Motor neuron (in vitro differentiated cells): ENCODE measurements at regions of chr5 and their contacts with region 1.

Region 1: DNA sequence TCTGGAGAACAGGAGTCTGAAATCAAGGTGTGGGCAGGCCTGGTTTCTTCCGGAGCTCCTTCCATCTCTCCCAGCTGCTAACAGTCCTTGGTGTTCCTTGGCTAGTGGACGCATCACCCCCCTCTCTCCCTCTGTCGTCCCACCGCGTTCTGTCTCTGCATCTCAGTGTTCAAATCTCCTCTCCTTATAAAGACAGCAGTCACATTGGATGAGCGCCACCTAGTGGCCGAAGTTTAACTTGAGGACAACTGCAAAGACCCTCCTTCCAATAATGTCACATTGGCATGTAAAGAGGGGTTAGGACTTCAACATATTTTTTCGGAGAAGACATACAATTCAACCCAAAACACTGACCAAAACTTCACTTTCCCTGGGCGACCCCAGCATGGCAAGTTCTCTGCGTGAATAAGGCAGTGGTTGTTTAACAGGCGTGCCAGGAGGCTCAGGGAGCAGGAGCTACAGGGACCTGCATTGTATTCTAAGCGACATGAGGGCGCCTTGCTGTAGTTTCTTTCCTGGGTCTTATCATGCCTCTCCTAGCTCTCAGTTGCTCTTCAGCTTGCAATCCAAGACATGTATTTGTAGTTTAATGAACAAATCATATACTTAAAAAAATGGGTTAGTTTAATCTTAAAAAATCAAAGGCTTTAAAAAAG is 27.9 kb upstream of the BASP1 start:
- ATAC-seq: peak in 6 of 8 experiments; percentile 34 to 71 (median 47)
- H3K4me3 ChIP-seq: no peak overlapping the region
- H3K27ac ChIP-seq: no peak overlapping the region
- H3K4me1 ChIP-seq: no peaks in the 10 kb centered on the region

Region 2: GRCh38 chr5:16489322-16489791 is 700.2 kb before region 1 on chr5:
- in situ Hi-C with region 1: loop called in 4 of 9 experiments (anchors 25 kb)
- ATAC-seq: peak; percentile 56 to 98 (median 92)
- H3K4me3 ChIP-seq: no peak overlapping the region
- H3K27ac ChIP-seq: no peak overlapping the region
- H3K4me1 ChIP-seq: peaks cover 0 to 4% of the 10 kb centered on the region in 2 donors

Region 3: DNA sequence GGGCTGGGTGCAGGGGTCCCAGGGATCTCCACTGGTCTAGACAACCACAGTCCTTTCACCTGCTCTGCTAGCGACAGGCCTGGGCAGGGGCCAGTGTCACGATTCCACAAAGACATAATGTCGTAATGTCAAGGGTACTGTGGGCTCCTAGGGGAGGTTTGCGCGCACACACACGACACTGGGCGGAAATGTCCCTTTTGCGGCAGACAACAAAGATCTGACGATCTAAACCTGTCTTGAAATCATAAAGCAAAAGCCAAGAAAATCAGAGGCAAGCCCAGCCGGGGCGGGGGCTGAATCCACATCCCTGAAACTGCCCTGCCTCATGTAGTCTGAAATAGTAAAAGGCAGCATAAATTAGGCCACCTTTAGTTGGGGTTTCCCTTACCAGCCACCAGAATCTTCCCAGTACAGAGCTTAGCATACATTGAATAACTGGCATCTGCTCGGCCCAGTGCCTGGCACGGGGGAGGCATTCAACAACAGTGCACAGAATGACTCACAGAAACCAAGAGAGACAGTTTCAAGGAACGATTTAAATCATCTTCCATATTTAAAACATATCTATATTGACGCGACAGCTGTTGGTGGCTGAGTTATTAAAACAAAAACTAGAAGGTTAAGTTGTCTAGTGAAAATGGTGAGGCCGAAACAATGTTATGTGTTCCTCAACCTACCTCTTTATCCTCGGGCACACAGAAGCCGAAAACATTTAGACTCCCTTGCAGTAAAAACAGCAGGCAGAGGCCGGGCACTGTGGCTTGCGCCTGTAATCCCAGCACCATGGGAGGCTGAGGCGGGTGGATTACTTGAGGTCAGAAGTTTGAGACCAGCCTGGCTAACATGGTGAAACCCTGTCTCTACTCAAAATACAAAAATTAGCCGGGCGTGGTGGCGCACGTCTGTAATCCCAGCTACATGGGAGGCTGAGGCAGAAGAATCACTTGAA is 404.4 kb before region 1 on chr5:
- in situ Hi-C with region 1: loop called in 8 of 9 experiments (anchors 10 to 25 kb)
- ATAC-seq: no peak
- H3K4me3 ChIP-seq: no peak overlapping the region
- H3K27ac ChIP-seq: no peak overlapping the region
- H3K4me1 ChIP-seq: peaks cover 0 to 6% of the 10 kb centered on the region in 2 donors

Region 4: DNA sequence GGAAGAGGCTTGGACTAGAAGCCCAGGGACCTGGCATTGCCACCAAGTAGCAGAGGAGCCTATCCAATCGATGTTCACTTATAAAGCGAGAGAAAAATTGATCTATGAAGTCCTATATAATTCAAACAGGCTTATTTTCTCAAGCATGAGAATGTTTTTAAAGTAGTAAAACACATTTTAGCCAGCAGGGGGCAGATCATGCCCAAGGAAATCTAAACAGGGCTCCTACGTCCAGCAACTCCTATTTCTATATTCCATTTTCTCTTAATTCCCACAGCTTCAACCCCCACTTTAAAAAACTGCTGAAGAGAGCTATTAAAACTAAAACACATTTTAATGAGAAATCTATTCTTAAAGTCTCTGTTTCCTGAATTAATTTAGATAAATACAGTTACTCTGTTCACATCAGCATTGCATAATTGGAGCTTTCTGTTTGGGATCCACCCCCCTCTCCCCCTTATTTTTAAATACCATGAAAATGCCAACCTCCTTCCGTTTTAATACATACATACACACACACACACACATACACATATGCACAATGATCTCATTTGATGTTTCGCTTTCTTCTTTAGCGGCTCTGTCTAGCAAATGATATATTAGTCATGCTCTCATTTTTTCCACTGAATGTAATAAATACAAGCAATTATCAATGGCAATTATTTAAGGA is 398.3 kb before region 1 on chr5:
- in situ Hi-C with region 1: loop called in 8 of 9 experiments (anchors 10 to 25 kb)
- ATAC-seq: peak in 7 of 8 experiments; percentile 40 to 82 (median 61)
- H3K4me3 ChIP-seq: no peak overlapping the region
- H3K27ac ChIP-seq: no peak overlapping the region
- H3K4me1 ChIP-seq: peaks cover 4 to 10% of the 10 kb centered on the region in 2 donors